ENCODE measurements at regions of chr15 and their contacts with region 1.

Region 1: DNA sequence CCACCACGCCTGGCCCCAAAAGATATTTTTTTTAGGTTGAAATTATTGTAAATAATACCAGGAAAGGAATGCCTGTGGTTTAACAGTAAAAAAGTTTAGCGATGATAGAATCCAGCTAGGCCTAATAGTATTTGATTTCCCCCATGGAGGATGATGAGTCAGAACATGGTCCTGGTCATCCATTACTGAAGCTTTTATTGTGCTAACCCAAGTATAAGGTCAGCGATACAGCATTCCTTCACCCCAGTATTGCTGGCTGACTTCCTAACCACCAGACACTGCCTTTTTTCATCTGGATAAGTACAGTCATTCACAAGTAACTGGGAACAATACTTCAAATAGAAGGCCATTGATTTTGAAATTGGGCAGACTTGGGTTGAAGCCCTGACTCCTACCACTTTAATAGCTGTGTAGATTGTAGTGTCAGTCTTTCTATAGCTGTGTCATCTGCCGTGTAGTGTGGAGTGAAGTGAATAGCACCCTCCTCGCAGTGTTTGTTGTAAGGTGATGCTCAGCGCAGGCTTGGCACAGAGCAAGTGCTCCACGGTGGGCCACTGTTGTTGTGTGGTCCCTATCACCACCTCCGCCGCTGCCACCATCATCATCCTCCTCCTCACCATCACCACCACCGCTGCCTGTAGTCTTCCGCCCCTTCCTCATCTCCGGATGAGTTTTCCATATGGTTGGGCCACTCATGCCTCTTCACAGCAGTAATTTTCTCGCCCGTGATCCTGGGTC is 436.0 kb upstream of the TPM1 start:
- DNase-seq: peak; percentile 98
- H3K4me3 ChIP-seq: no peak overlapping the region
- H3K27ac ChIP-seq: peak overlapping the region; percentile 58
- H3K27me3 ChIP-seq: no peaks in the 10 kb centered on the region
- CTCF ChIP-seq: no peak

Region 2: GRCh38 chr15:62618432-62618831 is 11.9 kb after region 1 on chr15:
- CTCF ChIA-PET with region 1: interaction called, 6 read pairs
- POLR2A ChIA-PET with region 1: interaction called, 30 read pairs
- DNase-seq: peak; percentile 79
- H3K4me3 ChIP-seq: no peak overlapping the region
- H3K27ac ChIP-seq: no peak overlapping the region
- H3K27me3 ChIP-seq: no peaks in the 10 kb centered on the region
- CTCF ChIP-seq: peak; percentile 74